MCF 10A (cell line): ENCODE measurements at regions of chr16 and their contacts with region 1.

Region 1: DNA sequence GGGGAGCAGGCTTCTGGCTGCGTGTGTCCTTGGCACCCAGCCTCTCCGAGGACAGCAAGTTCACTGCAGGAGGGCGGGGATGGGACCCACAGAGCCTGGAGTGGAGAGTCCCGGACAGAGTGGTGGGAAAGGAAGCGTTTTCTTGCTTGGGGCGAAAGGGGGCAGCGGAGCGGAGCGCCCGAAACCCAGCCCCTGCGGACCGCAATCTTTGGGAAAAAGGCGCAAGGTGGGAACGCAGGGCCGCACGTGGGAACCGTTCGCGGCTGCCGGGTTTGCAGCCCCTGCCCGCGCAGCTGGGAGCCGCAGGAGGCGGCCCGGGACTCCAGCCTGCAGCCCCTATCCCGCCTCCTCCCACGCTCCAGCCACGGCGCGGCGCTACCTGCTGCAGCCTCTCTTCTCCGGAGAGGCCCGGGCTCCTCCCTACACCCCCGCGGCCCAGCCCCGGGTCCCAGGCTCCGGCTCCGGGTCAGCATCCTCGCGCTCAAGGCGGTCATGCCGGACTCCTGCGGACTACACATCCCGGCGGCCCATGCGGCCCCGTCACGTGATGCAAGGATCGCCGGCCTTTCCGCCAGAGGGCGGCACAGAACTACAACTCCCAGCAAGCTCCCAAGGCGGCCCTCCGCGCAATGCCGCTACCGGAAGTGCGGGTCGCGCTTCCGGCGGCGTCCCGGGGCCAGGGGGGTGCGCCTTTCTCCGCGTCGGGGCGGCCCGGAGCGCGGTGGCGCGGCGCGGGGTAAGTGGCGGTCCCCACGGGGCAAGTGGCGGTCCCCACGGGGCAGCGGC is at the starts of genes NTHL1 and TSC2:
- DNase-seq: peak; percentile 95
- H3K4me3 Mint-ChIP-seq: peak within 1 kb of the TSS; percentile 86
- H3K27ac Mint-ChIP-seq: peak within 1 kb of the TSS; percentile 63
- H3K4me1 Mint-ChIP-seq: peaks cover 23% of the 10 kb centered on the region
- H3K27me3 Mint-ChIP-seq: no peaks in the 10 kb centered on the region
- CTCF ChIP-seq: peak; percentile 39
- total RNA-seq, gene NTHL1: 16.4 and 17.7 TPM in 2 replicates
- total RNA-seq, gene TSC2: 99.8 and 136 TPM in 2 replicates

Region 2: DNA sequence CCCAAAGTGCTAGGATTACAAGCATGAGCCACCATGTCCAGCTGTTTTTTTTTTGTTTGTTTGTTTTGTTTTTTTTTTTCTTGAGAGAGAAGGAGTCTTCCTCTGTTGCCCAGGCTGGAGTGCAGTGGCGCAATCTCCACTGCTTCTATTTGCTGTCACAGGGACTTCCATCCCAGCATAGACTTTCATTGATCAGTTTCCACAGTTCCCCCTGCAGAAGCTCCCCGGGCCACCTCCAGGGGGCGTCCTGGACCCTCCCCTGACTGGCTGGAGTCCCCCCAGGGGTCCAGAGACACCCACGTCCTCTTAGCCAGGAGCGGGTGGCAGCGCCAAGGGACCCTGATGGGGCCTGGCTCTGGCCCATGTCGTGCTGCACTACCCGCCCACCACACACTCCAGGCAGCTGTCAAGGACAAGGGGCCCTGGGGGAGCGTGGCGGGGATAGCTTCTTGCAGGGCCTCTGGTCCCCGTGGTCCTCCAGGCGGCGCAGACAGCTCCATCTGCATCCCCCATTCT is 31.1 kb before region 1 on chr16:
- CTCF ChIA-PET with region 1: interaction called, 4 read pairs
- POLR2A ChIA-PET with region 1: interaction called, 11 read pairs
- intact Hi-C with region 1: no loop called
- DNase-seq: no peak
- H3K4me3 Mint-ChIP-seq: peak overlapping the region; percentile 47
- H3K27ac Mint-ChIP-seq: peak overlapping the region; percentile 96
- H3K4me1 Mint-ChIP-seq: peaks cover 6% of the 10 kb centered on the region
- H3K27me3 Mint-ChIP-seq: no peaks in the 10 kb centered on the region
- CTCF ChIP-seq: peak; percentile 39

Region 3: DNA sequence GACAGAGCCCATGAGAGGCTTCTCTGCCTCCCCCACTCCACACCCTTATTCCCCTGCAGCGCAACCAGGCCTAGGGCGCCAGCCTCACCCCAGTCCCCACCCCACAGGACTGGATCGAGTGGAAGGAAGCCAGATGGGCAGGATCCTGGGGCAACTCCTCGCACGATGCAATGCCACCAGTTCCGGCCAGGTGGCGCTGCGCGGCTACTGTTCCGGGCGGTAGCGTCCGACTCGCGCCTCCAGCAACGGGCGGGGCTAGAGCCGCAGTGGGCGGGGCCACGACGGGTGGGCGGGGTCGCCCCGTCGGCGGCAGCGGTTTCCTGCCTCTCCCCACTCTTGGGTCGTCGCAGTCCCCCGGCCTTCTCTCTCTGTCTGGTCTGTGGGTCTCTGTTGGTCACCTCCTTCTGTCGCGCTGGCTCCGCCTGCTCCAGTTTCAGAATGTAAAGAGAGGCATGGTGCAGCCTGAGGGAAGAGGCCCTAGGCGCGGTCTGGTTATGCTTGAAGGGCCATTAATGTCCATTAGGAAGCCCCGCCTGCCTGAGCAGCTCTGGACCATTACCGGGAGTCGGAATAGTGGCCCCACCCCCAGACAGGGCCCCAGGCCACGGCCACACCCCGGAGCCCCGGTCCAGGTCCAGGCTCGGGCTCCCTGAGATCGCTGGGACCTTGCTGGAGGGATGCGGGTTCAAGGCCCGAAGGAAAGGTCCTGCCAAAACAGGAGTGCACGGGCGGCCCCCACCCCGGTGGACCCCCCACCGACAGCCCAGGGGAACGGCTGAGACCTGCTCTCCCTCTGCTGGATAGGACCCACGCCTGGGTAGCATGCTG is 24.2 kb before region 1 on chr16:
- CTCF ChIA-PET with region 1: interaction called, 5 read pairs
- POLR2A ChIA-PET with region 1: interaction called, 11 read pairs
- intact Hi-C with region 1: no loop called
- DNase-seq: peak; percentile 88
- H3K4me3 Mint-ChIP-seq: peak overlapping the region; percentile 18
- H3K27ac Mint-ChIP-seq: peak overlapping the region; percentile 11
- H3K4me1 Mint-ChIP-seq: peaks cover 9% of the 10 kb centered on the region
- H3K27me3 Mint-ChIP-seq: no peaks in the 10 kb centered on the region
- CTCF ChIP-seq: peak; percentile 96